ENCODE measurements at regions of chr5 and their contacts with region 1.

Region 1: DNA sequence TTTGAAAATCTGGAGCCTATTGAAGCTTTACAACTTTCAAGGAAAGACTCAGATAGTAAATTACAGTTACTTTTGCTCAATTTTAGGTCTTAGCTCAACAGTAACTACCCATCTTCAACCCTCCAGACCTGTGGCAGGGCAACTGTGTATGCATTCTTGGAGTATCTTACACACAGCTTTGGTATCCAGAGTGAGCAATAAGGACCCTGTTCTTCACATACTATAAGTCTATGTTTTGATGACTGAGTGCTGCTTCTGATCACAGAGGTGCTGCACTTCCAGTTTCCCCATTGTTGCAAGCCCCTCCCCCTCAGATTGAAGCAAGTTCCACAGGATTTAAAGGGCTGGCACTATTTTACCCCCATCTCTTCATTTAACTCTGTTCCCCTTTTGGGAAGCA is 737.4 kb upstream of the GRAMD2B start:
- DNase-seq: no peak

Region 2: DNA sequence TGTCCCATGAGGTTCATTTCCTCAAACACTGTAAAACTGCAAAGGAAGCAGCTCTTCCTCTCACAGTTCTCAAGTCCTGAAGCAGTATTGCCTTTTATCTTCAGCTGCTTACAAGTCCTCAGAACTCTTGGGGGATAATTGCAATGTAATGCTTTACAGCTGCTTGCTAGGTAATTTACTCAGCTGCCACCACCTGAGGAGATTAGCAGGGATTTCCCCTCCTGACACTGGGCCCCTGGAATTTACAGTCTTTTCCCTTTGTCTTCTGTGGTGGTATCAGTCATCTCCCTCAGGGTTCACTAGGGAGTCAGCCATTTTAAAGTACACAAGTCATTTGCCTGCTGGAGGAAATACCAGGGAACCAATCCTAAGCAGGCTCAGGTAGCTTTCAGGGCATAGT is 16.9 kb before region 1 on chr5:
- intact Hi-C with region 1: loop called in 1 of 2 experiments (anchors 1 kb)
- DNase-seq: no peak